ENCODE measurements at regions of chr20 and their contacts with region 1.

Region 1: GRCh38 chr20:46545077-46545826 is 5.2 kb downstream of the OCSTAMP start:
- DNase-seq: peak; percentile 75
- ATAC-seq: peak; percentile 82
- H3K4me3 Mint-ChIP-seq: peak overlapping the region; percentile 47
- H3K27ac Mint-ChIP-seq: peak overlapping the region; percentile 91
- H3K4me1 Mint-ChIP-seq: peaks cover 10% of the 10 kb centered on the region
- H3K27me3 Mint-ChIP-seq: peaks cover 12% of the 10 kb centered on the region

Region 2: GRCh38 chr20:46330072-46330763 is 215.0 kb before region 1 on chr20:
- CTCF ChIA-PET with region 1: no interaction called
- POLR2A ChIA-PET with region 1: no interaction called
- intact Hi-C with region 1: no loop called
- DNase-seq: no peak
- ATAC-seq: no peak
- H3K4me3 Mint-ChIP-seq: no peak overlapping the region
- H3K27ac Mint-ChIP-seq: no peak overlapping the region
- H3K4me1 Mint-ChIP-seq: no peaks in the 10 kb centered on the region
- H3K27me3 Mint-ChIP-seq: peaks cover 20% of the 10 kb centered on the region

Region 3: DNA sequence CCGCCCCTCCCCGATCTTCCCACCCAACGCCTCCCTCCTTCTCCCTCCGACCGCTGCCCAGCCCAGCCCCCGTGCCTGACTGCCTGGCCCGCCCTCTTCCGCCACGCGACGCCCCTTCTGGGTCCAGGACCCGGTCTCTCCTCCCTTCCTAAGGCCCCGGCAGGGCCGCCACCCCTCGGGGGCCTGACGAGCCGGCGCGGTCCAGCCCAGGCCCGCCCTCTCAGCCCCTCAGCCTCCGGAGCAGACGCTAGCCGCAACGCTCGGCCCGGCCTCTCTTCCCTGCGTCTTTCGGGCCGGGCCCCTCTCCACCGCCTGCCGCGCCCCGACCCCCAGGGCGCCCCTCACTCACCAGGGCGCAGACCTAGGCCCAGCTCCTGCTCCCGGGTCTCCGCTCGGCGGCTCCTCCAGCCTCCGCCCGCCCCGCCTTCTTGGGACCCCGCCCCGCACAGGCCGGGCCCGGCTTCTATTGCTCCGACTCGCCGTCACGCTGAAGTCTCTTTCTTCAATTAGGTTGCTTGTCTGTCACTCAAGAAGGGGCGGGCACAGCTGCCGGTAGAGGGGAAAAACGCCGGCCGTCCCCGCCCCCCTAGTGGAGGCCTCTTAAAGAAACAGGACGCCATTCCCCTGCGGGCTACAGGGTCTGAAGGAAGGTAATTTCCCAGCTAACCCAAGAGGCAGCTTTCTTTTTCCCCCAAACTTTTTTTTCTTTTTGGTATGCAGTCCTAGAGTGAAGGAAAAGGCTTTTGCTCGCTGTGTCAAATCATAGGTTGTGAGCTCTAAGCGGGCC is 138.9 kb before region 1 on chr20 and contains the start of gene ELMO2:
- CTCF ChIA-PET with region 1: no interaction called
- POLR2A ChIA-PET with region 1: no interaction called
- intact Hi-C with region 1: loop called in 1 of 2 experiments (anchors 2 kb)
- DNase-seq: peak; percentile 98
- ATAC-seq: peak; percentile 85
- H3K4me3 Mint-ChIP-seq: peak within 1 kb of the TSS; percentile 88
- H3K27ac Mint-ChIP-seq: peak within 1 kb of the TSS; percentile 85
- H3K4me1 Mint-ChIP-seq: peaks cover 65% of the 10 kb centered on the region
- H3K27me3 Mint-ChIP-seq: no peaks in the 10 kb centered on the region
- total RNA-seq, gene ELMO2: 47.4 to 54.6 TPM

Region 4: GRCh38 chr20:46512943-46513844 is 32.1 kb before region 1 on chr20 and contains the start of gene ZNF334:
- CTCF ChIA-PET with region 1: interaction called, 4 read pairs
- POLR2A ChIA-PET with region 1: no interaction called
- intact Hi-C with region 1: loop called (anchors 1 kb)
- DNase-seq: peak; percentile 83
- ATAC-seq: peak; percentile 99
- H3K4me3 Mint-ChIP-seq: peak within 1 kb of the TSS; percentile 77
- H3K27ac Mint-ChIP-seq: peak within 1 kb of the TSS; percentile 76
- H3K4me1 Mint-ChIP-seq: peaks cover 24% of the 10 kb centered on the region
- H3K27me3 Mint-ChIP-seq: peaks cover 29% of the 10 kb centered on the region
- total RNA-seq, gene ZNF334: 3.4 to 4.9 TPM

Region 5: GRCh38 chr20:46681032-46681854 is 136.0 kb after region 1 on chr20:
- CTCF ChIA-PET with region 1: interaction called, 4 read pairs
- POLR2A ChIA-PET with region 1: no interaction called
- intact Hi-C with region 1: loop called in 1 of 2 experiments (anchors 2 kb)
- DNase-seq: peak; percentile 83
- ATAC-seq: peak; percentile 80
- H3K4me3 Mint-ChIP-seq: no peak overlapping the region
- H3K27ac Mint-ChIP-seq: no peak overlapping the region
- H3K4me1 Mint-ChIP-seq: peaks cover 29% of the 10 kb centered on the region
- H3K27me3 Mint-ChIP-seq: no peaks in the 10 kb centered on the region

Region 6: DNA sequence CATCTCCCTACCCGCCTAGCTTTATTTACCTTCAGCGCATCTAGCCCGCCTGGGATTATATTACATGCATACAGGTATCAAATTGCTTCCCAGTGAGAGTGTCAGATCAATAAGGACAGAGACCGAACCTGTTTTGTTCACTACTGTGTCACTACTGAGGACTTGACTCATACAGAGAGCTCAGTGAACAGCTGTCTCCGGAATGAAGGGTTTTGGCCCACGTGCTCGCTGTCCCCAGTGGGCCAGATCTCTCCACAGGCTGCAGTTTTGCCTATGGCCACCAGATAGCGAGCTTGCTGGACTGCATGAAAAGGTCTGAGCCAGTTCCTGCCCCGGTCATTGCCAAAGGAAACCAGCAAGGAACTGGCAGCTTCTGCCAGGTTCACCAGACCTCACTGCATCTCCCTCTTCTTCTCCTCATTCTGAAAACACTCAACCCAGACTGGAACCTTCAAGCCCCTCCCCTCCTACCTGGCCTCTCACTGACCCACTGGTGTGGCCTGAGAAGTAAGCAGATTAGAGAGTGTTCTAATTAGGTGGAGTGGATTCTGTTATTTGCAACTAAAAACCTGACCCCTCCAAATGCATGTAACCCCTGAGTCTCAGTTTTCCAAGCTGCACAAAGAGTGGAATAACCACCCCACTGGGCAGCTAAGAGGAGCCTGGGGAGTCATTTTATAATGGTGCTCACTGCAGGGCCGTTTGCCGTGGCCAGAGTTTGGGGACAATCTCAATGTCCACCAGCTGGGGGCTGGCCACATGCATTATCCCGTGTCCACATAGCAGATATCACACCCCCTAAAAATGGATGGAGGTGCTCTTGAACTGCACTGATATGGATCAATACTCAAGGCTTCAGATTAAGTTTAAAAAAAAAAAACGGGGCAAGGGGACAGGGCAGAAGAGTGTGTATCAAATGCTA is 660.6 kb after region 1 on chr20:
- CTCF ChIA-PET with region 1: no interaction called
- POLR2A ChIA-PET with region 1: no interaction called
- intact Hi-C with region 1: no loop called
- DNase-seq: peak; percentile 82
- ATAC-seq: peak; percentile 88
- H3K4me3 Mint-ChIP-seq: no peak overlapping the region
- H3K27ac Mint-ChIP-seq: no peak overlapping the region
- H3K4me1 Mint-ChIP-seq: peaks cover 6% of the 10 kb centered on the region
- H3K27me3 Mint-ChIP-seq: no peaks in the 10 kb centered on the region